Motor neuron (in vitro differentiated cells): ENCODE measurements at regions of chr14 and their contacts with region 1.

Region 1: DNA sequence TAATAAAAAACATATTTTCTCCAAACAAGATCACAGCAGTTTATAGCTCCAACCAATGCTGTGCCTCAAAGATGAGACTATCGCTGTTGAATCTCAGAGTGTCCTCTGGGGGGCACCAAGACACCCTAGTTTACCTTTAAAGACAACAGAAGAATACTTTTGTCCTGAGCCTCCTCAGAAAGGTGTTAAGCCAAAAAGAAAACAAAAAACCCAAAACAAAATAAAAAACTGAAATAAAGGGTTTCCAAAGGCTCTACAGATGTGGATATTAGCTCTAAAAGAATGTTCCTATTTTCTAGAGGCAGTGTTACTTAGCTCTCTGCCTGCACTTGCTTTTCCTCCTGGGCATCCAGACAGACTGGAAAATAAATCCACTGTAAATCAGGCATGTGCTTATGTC is 86.9 kb upstream of the TTC7B start:
- ATAC-seq: peak; percentile 61 to 96 (median 80)
- H3K4me3 ChIP-seq: no peak overlapping the region
- H3K27ac ChIP-seq: no peak overlapping the region
- H3K4me1 ChIP-seq: no peaks in the 10 kb centered on the region

Region 2: GRCh38 chr14:90827916-90828610 is 75.0 kb before region 1 on chr14:
- in situ Hi-C with region 1: no loop called
- ATAC-seq: peak; percentile 99 to 100 (median 100)
- H3K4me3 ChIP-seq: peak overlapping the region; percentile 24 to 34 (median 32)
- H3K27ac ChIP-seq: no peak overlapping the region
- H3K4me1 ChIP-seq: peaks cover 0 to 5% of the 10 kb centered on the region in 2 donors

Region 3: DNA sequence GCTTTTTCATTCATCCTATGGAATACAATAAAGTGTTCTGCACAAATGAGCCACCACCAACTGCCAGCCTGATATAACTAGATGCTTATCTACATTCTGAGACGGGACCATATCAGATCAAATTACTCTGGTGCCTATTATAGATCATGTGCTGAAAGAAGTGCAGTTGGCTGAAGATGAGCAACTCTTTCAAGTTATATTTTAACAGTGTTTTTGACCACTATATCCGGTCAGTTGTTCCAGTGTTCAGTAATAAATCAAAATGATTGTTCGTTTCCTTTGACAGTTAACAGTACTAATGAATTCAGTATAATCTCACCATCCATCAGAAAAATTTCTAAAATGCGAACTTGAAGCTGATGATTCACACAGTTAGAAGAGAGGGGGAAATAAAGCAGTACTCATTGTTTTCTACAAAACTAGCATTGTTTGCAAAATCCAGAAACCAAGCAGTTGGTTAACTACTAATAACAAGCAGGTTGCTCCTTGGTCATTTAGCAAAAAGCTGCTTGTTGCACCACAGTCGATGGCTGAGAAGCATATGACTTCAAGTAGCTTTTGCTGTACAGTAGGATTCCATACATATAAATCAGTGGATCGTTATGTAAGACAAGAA is 155.0 kb after region 1 on chr14:
- in situ Hi-C with region 1: no loop called
- ATAC-seq: no peak
- H3K4me3 ChIP-seq: peak overlapping the region in 1 of 5 donors; percentile 99
- H3K27ac ChIP-seq: no peak overlapping the region
- H3K4me1 ChIP-seq: peaks cover 4 to 5% of the 10 kb centered on the region in 2 donors

Region 4: GRCh38 chr14:91138511-91139359 is 235.6 kb after region 1 on chr14:
- in situ Hi-C with region 1: loop called in 2 of 9 experiments (anchors 25 kb)
- ATAC-seq: no peak
- H3K4me3 ChIP-seq: no peak overlapping the region
- H3K27ac ChIP-seq: no peak overlapping the region
- H3K4me1 ChIP-seq: no peaks in the 10 kb centered on the region

Region 5: DNA sequence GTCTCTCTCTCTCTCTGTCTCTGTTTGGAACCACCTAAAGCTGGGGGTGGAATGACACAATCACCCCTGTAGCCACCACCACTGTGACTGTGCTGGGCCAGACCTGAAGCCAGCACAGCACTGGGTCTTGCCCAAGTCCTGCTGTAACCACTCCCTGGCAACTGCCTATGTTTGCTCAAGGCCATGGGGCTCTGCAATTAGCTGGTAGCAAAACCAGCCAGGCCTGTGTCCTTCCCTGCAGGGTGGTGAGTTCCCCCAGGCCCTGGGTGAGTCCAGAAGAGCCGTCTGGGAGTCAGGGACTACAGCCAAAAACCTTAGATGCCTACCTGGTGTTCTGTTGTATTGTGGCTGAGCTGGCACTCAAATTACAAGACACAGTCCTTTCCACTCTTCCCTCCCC is 261.6 kb after region 1 on chr14:
- in situ Hi-C with region 1: loop called in 3 of 9 experiments (anchors 10 to 25 kb)
- ATAC-seq: peak in 2 of 8 experiments; percentile 17 to 60
- H3K4me3 ChIP-seq: no peak overlapping the region
- H3K27ac ChIP-seq: no peak overlapping the region
- H3K4me1 ChIP-seq: no peaks in the 10 kb centered on the region

Region 6: GRCh38 chr14:91177073-91178034 is 274.3 kb after region 1 on chr14:
- in situ Hi-C with region 1: loop called in 4 of 9 experiments (anchors 10 to 25 kb)
- ATAC-seq: peak in 6 of 8 experiments; percentile 20 to 90 (median 76)
- H3K4me3 ChIP-seq: no peak overlapping the region
- H3K27ac ChIP-seq: no peak overlapping the region
- H3K4me1 ChIP-seq: peaks cover 7 to 12% of the 10 kb centered on the region in 2 donors

Region 7: DNA sequence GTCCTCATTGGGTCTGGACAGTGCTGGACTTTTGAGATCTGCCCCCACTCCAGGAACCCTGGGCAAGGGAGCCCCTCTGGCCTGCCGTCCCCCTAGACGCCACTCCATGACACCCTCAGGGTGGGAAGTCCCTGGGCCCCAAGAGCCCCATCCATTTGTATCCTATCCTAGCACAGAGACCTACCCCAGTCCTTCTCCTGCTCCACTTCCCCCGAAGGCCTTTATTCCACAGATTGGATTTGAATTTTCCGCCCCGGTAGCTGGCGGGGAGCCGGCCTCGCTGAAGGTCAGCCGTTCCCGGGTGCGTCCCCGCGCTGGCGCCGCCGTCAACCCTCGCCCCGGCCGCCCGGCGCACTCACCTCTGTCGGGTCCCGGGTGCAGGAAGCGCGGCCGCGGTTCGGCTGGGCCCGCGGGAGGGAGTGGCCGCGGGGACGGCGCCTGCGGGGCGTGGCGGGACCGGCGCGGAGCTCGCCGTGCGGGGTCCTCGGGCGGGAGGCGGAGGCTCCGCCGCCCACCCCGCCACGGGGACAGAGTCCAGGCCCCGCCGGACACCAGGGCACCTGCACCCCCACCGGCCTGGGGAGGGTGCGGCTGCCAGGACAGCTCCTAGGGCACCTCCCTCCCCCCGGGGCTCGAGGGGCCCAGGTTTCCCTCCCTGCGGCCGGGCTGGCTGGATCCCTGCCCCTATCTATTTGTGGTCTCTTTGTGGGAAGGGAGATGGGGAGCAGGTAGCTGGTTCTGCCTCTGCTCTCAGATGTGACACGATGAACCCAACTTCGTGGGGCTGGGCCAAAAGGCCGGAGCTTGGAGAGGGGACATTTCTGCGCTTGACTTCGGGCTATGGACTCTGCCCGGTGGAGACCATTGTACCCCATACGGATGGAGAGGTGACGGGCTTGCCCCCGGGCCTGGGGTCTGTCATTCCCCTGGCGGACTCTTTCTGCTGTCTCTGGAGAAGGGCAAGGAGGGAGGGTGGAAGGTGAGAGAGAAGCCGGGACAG is 361.4 kb after region 1 on chr14:
- in situ Hi-C with region 1: no loop called
- ATAC-seq: peak; percentile 42 to 74 (median 60)
- H3K4me3 ChIP-seq: peak overlapping the region; percentile 13 to 23 (median 17)
- H3K27ac ChIP-seq: no peak overlapping the region
- H3K4me1 ChIP-seq: peaks cover 0 to 5% of the 10 kb centered on the region in 2 donors

Region 8: DNA sequence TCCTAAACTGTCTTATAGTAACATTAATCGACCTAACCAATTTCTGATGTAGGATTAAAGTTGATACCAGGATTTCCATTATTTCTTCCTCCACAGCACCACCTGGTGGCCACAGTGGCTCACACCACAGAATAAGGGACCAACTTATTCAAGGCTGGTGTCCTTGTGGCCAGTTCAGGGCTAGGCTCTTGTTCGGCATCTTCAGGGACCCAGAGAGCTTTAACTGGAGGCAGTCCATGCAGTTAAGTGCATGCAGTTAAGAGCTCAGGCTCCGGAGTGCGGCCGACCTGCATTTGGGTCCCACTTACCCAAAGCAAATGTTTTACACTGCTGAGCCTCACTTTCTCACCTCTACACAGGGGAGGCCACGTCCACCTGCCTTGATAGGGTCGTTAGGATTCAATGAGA is 383.4 kb after region 1 on chr14:
- in situ Hi-C with region 1: loop called in 4 of 9 experiments (anchors 25 kb)
- ATAC-seq: peak; percentile 65 to 85 (median 76)
- H3K4me3 ChIP-seq: no peak overlapping the region
- H3K27ac ChIP-seq: no peak overlapping the region
- H3K4me1 ChIP-seq: peaks cover 3 to 13% of the 10 kb centered on the region in 2 donors